Naive thymus-derived CD4-positive, alpha-beta T cell (primary cell): ENCODE measurements at regions of chrX and their contacts with region 1.

Region 1: DNA sequence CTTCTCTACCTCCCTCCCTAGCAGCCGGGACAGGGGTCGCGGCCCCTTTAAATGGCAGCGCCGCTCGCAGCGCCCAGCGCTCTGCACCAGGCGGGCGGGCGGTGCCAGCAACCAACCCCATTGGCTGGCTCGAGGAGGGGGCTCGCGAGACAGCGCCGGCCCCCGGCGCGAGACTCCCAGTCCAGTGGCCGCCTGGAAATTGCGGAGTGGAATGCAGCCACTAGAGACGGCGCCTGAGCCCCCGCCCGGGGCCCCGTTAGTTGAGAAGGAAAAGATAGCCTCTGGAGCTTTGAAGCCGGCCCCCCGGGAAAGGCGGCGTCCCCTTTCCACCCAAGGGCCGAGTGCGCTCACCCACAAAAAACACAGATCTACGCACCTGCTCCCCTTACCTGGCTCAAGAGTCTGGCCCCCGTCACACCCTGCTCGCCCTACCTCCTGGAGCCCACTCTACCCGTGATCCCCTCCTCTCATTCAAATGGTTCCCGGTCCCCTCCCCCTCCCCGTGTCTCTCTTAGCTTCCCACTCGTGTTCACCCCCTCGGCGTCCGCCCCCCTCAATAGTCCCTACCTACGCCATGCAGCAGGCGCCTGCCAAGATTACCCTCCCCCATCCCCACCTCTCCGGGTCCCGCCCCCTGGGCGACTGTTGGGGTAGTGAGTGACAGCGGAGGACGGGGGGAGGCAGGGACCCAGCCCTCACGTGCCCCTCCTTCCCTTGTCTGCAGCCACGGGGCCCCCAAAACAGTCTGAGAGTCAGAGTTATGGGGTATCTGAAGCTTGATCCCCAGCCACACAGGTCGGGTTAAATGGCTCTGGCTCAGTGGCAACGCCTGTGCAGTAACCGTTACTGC is at the start of gene ZMYM3:
- DNase-seq: peak; percentile 46 to 87 (median 78)
- ATAC-seq: peak; percentile 89
- H3K4me3 ChIP-seq: peak within 1 kb of the TSS; percentile 79
- H3K4me3 Mint-ChIP-seq: peak within 1 kb of the TSS; percentile 76 to 97 (median 90)
- H3K27ac ChIP-seq: peak within 1 kb of the TSS; percentile 91
- H3K27ac Mint-ChIP-seq: peak within 1 kb of the TSS; percentile 87 to 96 (median 91)
- H3K4me1 ChIP-seq: peaks cover 0 to 20% of the 10 kb centered on the region in 2 donors
- H3K4me1 Mint-ChIP-seq: peaks cover 0 to 30% (median 18%) of the 10 kb centered on the region in 7 donors
- H3K27me3 ChIP-seq: no peaks in the 10 kb centered on the region
- H3K27me3 Mint-ChIP-seq: no peaks in the 10 kb centered on the region
- total RNA-seq, gene ZMYM3: 21.2 to 34.1 (median 21.6) TPM

Region 2: DNA sequence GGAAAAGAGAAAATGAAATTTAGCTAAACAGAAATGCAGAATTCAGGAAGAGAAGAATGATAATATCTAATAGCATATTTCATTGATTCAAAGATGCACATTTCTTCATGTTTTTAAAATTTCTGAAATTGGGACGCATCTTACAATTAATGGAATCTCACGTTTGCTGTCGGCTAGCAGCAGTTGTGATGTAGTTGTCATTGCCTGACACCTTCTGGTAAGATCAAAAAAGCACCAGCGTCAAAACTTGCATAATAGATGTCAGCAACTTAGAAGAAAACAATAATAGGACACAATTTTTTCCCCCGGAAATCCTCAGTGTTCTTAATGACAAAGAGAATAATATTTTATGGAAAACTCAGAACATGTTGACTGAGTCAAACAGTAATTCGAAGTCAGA is 293.6 kb before region 1 on chrX:
- CTCF ChIA-PET with region 1: no interaction called
- POLR2A ChIA-PET with region 1: no interaction called
- intact Hi-C with region 1: no loop called
- DNase-seq: no peak
- ATAC-seq: no peak
- H3K4me3 ChIP-seq: no peak overlapping the region
- H3K4me3 Mint-ChIP-seq: no peak overlapping the region
- H3K27ac ChIP-seq: no peak overlapping the region
- H3K27ac Mint-ChIP-seq: no peak overlapping the region
- H3K4me1 ChIP-seq: no peaks in the 10 kb centered on the region
- H3K4me1 Mint-ChIP-seq: peaks cover 0 to 6% (median 0%) of the 10 kb centered on the region in 7 donors
- H3K27me3 ChIP-seq: no peaks in the 10 kb centered on the region
- H3K27me3 Mint-ChIP-seq: peaks cover 0 to 27% (median 0%) of the 10 kb centered on the region in 5 donors

Region 3: DNA sequence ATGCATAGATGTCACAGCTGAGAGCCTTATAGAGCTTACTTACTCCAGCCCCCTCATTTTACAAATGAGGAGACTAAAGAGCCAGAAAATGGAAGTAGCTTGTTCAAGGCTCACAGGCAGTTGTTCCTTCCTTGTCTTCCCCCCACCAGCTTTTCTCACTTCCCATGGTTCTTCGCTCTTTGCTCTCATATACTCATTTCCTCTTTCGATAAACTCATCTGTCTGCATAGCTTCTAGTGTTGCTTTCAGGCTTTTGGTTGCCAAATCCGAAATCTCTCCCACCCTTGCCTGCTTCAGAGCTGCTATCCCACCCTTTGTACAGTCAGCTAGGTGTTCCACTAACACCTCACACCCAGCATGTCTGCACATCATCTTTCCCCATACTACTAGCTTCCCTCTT is 56.3 kb before region 1 on chrX:
- CTCF ChIA-PET with region 1: interaction called, 3 read pairs
- POLR2A ChIA-PET with region 1: interaction called, 7 read pairs
- intact Hi-C with region 1: loop called (anchors 2 kb)
- DNase-seq: peak in 7 of 9 donors; percentile 8 to 40 (median 20)
- ATAC-seq: peak; percentile 69
- H3K4me3 ChIP-seq: peak overlapping the region; percentile 62
- H3K4me3 Mint-ChIP-seq: peak overlapping the region; percentile 79 to 94 (median 90)
- H3K27ac ChIP-seq: peak overlapping the region; percentile 50
- H3K27ac Mint-ChIP-seq: peak overlapping the region; percentile 80 to 94 (median 89)
- H3K4me1 ChIP-seq: peaks cover 0 to 4% of the 10 kb centered on the region in 2 donors
- H3K4me1 Mint-ChIP-seq: peaks cover 18 to 35% (median 25%) of the 10 kb centered on the region in 7 donors
- H3K27me3 ChIP-seq: no peaks in the 10 kb centered on the region
- H3K27me3 Mint-ChIP-seq: no peaks in the 10 kb centered on the region

Region 4: GRCh38 chrX:71885099-71885498 is 630.8 kb after region 1 on chrX:
- CTCF ChIA-PET with region 1: no interaction called
- POLR2A ChIA-PET with region 1: no interaction called
- intact Hi-C with region 1: no loop called
- DNase-seq: no peak
- ATAC-seq: no peak
- H3K4me3 ChIP-seq: no peak overlapping the region
- H3K4me3 Mint-ChIP-seq: no peak overlapping the region
- H3K27ac ChIP-seq: no peak overlapping the region
- H3K27ac Mint-ChIP-seq: no peak overlapping the region
- H3K4me1 ChIP-seq: no peaks in the 10 kb centered on the region
- H3K4me1 Mint-ChIP-seq: no peaks in the 10 kb centered on the region
- H3K27me3 ChIP-seq: no peaks in the 10 kb centered on the region
- H3K27me3 Mint-ChIP-seq: peaks cover 0 to 13% (median 8%) of the 10 kb centered on the region in 5 donors